ENCODE measurements at regions of chr5 and their contacts with region 1.

Region 1: DNA sequence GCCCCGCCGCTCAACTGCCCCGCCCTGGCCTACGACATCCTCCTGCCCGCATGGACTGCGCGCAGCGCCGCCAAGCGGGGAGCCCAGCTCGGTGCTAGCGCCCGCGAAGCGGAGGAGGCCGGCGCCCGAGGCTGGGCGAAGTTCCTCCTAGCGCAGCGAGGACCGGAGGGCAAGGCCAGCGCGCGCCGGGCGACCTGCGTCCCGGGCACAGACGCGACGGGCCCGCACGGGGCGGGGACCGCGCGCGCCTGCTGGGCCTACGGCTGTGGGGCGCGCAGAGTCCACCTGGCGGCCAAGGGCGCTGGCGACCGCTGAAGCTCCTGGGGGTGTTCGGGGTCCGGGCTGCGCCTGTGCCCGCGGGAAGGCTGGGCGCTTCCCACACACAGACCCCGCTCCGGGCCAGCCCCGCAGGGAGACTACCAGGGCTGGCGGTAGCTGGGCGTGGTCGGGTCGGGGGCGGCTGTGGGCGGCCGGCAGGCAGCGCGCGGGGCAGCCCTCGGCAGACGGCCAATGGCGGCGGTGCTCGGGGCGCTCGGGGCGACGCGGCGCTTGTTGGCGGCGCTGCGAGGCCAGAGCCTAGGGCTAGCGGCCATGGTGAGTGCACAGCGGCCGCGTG is at the start of gene PCBD2:
- DNase-seq: peak; percentile 90 to 95
- ATAC-seq: peak; percentile 86 to 97 (median 86)
- H3K4me3 ChIP-seq: peak within 1 kb of the TSS; percentile 71
- H3K4me3 Mint-ChIP-seq: peak within 1 kb of the TSS; percentile 96
- H3K27ac ChIP-seq: peak within 1 kb of the TSS; percentile 92
- H3K27ac Mint-ChIP-seq: peak within 1 kb of the TSS; percentile 91 to 94
- H3K4me1 ChIP-seq: peaks cover 11% of the 10 kb centered on the region
- H3K4me1 Mint-ChIP-seq: peaks cover 4% of the 10 kb centered on the region in 2 donors
- H3K27me3 ChIP-seq: no peaks in the 10 kb centered on the region
- H3K27me3 Mint-ChIP-seq: no peaks in the 10 kb centered on the region
- CTCF ChIP-seq: peak; percentile 91
- total RNA-seq, gene PCBD2: 7.6 to 11.5 (median 7.7) TPM

Region 2: DNA sequence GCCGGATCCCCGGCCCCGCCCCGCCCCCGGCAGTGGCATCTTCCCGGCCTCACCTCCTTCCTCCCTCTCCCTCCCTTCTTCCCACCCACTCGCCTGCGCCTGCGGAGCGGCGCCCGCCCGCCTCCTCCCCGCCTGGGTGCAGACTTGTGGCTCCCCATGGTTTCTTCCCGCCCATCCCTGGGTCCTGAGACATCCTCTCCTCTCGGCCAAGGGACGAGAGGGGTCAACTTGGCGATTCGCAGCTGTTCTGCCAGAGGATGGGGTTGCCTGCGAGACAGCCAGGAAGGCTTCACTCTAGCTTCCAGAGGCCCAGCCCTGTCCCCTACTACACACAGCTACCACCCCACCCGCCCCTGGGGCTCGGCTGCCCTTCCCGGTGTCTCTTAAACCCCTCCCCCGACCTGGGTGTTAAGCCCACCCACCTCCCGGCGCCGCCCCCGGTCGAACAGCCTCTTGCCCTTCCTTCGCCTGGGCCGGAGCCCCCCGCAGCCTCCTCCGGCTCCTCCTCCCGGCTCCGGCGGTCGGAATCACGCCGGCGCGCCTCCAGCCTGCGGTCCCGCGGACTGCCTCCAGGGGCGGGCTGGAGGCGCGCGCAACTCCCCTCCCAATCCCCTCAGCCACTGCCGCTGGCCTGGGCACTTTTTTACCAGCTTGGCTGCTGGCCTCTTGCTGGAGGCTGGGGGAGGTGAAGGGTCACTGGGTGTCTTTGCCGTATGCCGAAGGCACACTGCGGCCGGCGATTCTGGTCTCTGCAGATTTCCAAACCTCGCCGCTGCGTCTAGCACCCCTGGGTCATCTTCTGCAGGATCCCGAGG is 377.4 kb before region 1 on chr5:
- intact Hi-C with region 1: loop called (anchors 10 kb)
- DNase-seq: peak; percentile 72 to 84
- ATAC-seq: peak; percentile 40 to 49 (median 40)
- H3K4me3 ChIP-seq: peak overlapping the region; percentile 75
- H3K4me3 Mint-ChIP-seq: peak overlapping the region; percentile 96
- H3K27ac ChIP-seq: peak overlapping the region; percentile 56
- H3K27ac Mint-ChIP-seq: peak overlapping the region; percentile 92 to 96
- H3K4me1 ChIP-seq: peaks cover 60% of the 10 kb centered on the region
- H3K4me1 Mint-ChIP-seq: peaks cover 40 to 70% of the 10 kb centered on the region in 2 donors
- H3K27me3 ChIP-seq: no peaks in the 10 kb centered on the region
- H3K27me3 Mint-ChIP-seq: no peaks in the 10 kb centered on the region
- CTCF ChIP-seq: peak; percentile 70

Region 3: DNA sequence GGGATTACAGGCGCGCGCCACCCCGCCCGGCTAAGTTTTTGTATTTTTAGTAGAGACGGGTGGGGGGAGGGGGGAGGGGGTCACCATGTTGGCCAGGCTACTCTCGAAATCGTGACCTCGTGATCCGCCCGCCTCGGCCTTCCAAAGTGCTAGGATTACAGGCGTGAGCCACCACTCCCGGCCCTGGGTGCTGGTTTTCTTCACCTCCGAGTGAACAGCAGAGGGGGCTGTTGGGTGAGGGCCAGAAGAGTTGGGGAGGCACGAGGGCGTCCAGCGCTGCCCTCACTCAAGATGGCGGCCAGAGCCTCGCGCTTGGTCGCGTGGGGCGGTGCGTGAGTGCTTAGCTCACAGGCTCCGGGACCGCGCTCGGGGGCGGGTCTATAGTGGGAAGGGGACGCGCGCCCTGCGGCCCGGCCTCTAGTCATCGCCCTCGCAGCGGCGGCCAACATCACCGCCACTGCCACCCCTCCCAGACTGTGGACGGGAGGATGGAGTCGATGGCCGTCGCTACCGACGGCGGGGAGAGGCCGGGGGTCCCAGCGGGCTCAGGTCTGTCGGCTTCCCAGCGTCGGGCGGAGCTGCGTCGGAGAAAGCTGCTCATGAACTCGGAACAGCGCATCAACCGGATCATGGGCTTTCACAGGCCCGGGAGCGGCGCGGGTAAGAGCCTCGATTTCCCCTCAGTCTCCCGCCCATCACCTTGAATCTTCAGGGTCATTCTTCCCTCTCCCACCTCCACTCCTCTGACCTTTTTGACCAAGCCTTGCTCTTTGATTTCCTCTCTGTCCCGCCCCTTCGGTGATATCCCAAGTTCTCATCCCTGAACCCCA is 166.4 kb before region 1 on chr5 and contains the start of gene CAMLG:
- intact Hi-C with region 1: loop called (anchors 1 kb)
- DNase-seq: peak; percentile 97 to 99
- ATAC-seq: peak; percentile 96 to 100 (median 97)
- H3K4me3 ChIP-seq: peak within 1 kb of the TSS; percentile 93
- H3K4me3 Mint-ChIP-seq: peak within 1 kb of the TSS; percentile 98
- H3K27ac ChIP-seq: peak within 1 kb of the TSS; percentile 89
- H3K27ac Mint-ChIP-seq: peak within 1 kb of the TSS; percentile 96 to 97
- H3K4me1 ChIP-seq: peaks cover 18% of the 10 kb centered on the region
- H3K4me1 Mint-ChIP-seq: peaks cover 16 to 27% of the 10 kb centered on the region in 2 donors
- H3K27me3 ChIP-seq: no peaks in the 10 kb centered on the region
- H3K27me3 Mint-ChIP-seq: no peaks in the 10 kb centered on the region
- CTCF ChIP-seq: peak; percentile 75
- total RNA-seq, gene CAMLG: 23.5 to 35.9 (median 34.6) TPM

Region 4: DNA sequence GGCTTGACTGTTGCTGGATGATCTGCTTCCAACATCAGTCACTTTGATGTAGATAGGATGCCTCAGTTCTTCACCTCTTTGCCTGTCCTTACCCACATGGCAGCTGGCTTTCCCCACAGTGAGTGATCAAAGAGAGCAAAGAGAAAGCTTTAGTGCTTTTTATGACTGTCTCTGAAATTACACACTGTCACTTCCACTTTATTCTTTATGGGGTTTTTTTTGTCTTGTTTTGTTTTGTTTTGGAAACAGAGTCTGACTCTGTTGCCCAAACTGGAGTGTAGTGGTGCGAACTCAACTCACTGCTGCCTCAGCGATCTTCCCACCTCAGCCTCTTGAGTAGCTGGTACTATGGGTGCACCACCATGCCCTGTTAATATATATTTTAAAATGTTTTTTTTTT is 91.3 kb before region 1 on chr5:
- intact Hi-C with region 1: no loop called
- DNase-seq: peak in 1 of 2 donors; percentile 31
- ATAC-seq: peak in 2 of 3 donors; percentile 17 to 53
- H3K4me3 ChIP-seq: no peak overlapping the region
- H3K4me3 Mint-ChIP-seq: no peak overlapping the region
- H3K27ac ChIP-seq: no peak overlapping the region
- H3K27ac Mint-ChIP-seq: peak overlapping the region in 1 of 2 donors; percentile 23
- H3K4me1 ChIP-seq: peaks cover 8% of the 10 kb centered on the region
- H3K4me1 Mint-ChIP-seq: peaks cover 5 to 7% of the 10 kb centered on the region in 2 donors
- H3K27me3 ChIP-seq: no peaks in the 10 kb centered on the region
- H3K27me3 Mint-ChIP-seq: no peaks in the 10 kb centered on the region
- CTCF ChIP-seq: no peak

Region 5: DNA sequence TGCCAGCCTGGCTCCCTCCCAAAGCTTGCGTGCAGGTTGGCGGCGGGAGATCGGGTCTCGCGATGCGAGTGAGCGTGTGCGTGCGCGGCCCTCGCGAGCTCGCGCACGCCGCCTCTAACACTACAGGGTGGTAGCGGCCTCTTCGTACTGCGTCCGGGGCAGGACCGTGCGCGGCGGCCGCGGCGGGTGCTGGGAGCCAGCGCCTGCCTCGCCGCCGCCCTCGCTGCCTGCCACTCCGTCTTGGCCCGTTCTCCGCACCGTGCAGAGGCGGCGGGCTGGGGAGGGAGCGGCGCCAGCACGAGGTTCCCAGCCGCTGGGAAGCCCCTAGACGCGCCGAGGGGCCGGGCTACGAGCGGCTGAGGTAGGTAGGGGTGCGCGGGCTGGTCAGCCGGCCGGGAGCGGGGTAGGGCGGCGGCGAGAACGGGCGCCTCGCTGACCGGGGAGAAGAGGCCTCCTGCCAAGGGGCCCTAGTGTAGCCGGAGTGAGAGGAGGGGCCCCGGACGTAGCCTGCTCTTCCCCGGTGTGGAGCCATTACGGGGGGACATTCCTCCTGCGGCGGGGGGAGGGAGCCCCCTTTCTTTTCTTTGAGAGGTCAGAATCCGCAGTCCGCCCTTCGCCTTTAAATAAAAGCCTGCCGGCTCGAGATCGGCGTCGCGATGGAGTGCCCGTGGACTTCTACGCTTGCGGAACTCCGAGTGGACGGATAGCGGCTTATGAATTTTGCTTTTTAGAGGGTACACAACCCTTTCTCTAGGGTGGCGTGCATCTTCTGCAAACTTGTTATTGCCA is 58.7 kb before region 1 on chr5 and contains the start of gene C5orf24:
- intact Hi-C with region 1: loop called (anchors 1 kb)
- DNase-seq: peak; percentile 86 to 98
- ATAC-seq: peak; percentile 91 to 98 (median 91)
- H3K4me3 ChIP-seq: peak within 1 kb of the TSS; percentile 87
- H3K4me3 Mint-ChIP-seq: peak within 1 kb of the TSS; percentile 96
- H3K27ac ChIP-seq: peak within 1 kb of the TSS; percentile 97
- H3K27ac Mint-ChIP-seq: peak within 1 kb of the TSS; percentile 94 to 99
- H3K4me1 ChIP-seq: peaks cover 24% of the 10 kb centered on the region
- H3K4me1 Mint-ChIP-seq: peaks cover 21 to 27% of the 10 kb centered on the region in 2 donors
- H3K27me3 ChIP-seq: no peaks in the 10 kb centered on the region
- H3K27me3 Mint-ChIP-seq: no peaks in the 10 kb centered on the region
- CTCF ChIP-seq: no peak
- total RNA-seq, gene C5orf24: 42.7 to 49.8 (median 44.7) TPM

Measured in natural killer cell (primary cell).